Mammary epithelial cell (primary cell): ENCODE measurements at regions of chr12 and their contacts with region 1.

Region 1: GRCh38 chr12:98490501-98491453 is 24.6 kb upstream of the TMPO start:
- DNase-seq: peak; percentile 63
- H3K4me3 ChIP-seq: no peak overlapping the region
- H3K27ac ChIP-seq: no peak overlapping the region
- H3K4me1 ChIP-seq: peaks cover 6% of the 10 kb centered on the region
- H3K27me3 ChIP-seq: no peaks in the 10 kb centered on the region
- CTCF ChIP-seq: peak; percentile 86 to 92

Region 2: GRCh38 chr12:98424726-98425401 is 65.9 kb before region 1 on chr12:
- CTCF ChIA-PET with region 1: no interaction called
- dilution Hi-C with region 1: no loop called
- in situ Hi-C with region 1: no loop called
- intact Hi-C with region 1: loop called (anchors 1 kb)
- DNase-seq: peak; percentile 69
- H3K4me3 ChIP-seq: no peak overlapping the region
- H3K27ac ChIP-seq: no peak overlapping the region
- H3K4me1 ChIP-seq: no peaks in the 10 kb centered on the region
- H3K27me3 ChIP-seq: no peaks in the 10 kb centered on the region
- CTCF ChIP-seq: peak; percentile 68 to 75

Region 3: DNA sequence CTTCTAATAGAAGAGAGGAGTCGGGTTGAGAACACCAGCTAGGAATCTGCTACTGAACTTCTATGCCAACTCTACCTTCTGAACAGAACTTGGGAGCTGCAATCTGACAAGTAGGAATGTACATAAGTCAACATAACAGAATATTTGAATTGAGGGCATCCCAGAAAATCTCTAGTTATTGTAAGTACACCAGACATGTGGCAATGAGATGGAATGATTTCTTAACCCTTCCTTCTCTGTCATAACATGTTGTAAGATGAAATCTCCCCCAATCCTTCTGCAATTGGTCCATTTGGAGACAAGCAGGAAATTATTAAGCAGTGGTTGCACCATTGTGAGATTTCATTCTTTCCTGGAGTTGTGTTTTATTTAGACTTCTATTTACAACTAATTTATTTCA is 44.1 kb before region 1 on chr12:
- CTCF ChIA-PET with region 1: no interaction called
- dilution Hi-C with region 1: loop called (anchors 5 kb)
- in situ Hi-C with region 1: no loop called
- intact Hi-C with region 1: no loop called
- DNase-seq: peak; percentile 35
- H3K4me3 ChIP-seq: no peak overlapping the region
- H3K27ac ChIP-seq: no peak overlapping the region
- H3K4me1 ChIP-seq: no peaks in the 10 kb centered on the region
- H3K27me3 ChIP-seq: no peaks in the 10 kb centered on the region
- CTCF ChIP-seq: no peak

Region 4: GRCh38 chr12:98516184-98516873 is 25.6 kb after region 1 on chr12:
- CTCF ChIA-PET with region 1: no interaction called
- dilution Hi-C with region 1: no loop called
- in situ Hi-C with region 1: no loop called
- intact Hi-C with region 1: loop called (anchors 1 kb)
- DNase-seq: peak; percentile 78
- H3K4me3 ChIP-seq: peak overlapping the region; percentile 86 to 90 (median 87)
- H3K27ac ChIP-seq: peak overlapping the region; percentile 69
- H3K4me1 ChIP-seq: no peaks in the 10 kb centered on the region
- H3K27me3 ChIP-seq: no peaks in the 10 kb centered on the region
- CTCF ChIP-seq: peak; percentile 51 to 78

Region 5: DNA sequence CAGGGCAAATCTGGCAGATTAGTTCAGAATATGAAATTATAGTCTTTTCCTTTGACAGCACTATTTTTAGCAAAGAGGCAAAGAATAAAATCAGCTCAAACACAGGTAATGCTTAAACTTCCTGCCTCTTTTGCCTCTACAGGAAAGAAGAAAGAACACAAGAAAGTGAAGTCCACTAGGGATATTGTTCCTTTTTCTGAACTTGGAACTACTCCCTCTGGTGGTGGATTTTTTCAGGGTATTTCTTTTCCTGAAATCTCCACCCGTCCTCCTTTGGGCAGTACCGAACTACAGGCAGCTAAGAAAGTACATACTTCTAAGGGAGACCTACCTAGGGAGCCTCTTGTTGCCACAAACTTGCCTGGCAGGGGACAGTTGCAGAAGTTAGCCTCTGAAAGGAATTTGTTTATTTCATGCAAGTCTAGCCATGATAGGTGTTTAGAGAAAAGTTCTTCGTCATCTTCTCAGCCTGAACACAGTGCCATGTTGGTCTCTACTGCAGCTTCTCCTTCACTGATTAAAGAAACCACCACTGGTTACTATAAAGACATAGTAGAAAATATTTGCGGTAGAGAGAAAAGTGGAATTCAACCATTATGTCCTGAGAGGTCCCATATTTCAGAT is 42.0 kb after region 1 on chr12:
- CTCF ChIA-PET with region 1: no interaction called
- dilution Hi-C with region 1: no loop called
- in situ Hi-C with region 1: no loop called
- intact Hi-C with region 1: loop called (anchors 1 kb)
- DNase-seq: peak; percentile 55
- H3K4me3 ChIP-seq: no peak overlapping the region
- H3K27ac ChIP-seq: no peak overlapping the region
- H3K4me1 ChIP-seq: no peaks in the 10 kb centered on the region
- H3K27me3 ChIP-seq: no peaks in the 10 kb centered on the region
- CTCF ChIP-seq: peak; percentile 62 to 65

Region 6: GRCh38 chr12:98544751-98545150 is 54.0 kb after region 1 on chr12:
- CTCF ChIA-PET with region 1: no interaction called
- dilution Hi-C with region 1: no loop called
- in situ Hi-C with region 1: no loop called
- intact Hi-C with region 1: no loop called
- DNase-seq: no peak
- H3K4me3 ChIP-seq: no peak overlapping the region
- H3K27ac ChIP-seq: no peak overlapping the region
- H3K4me1 ChIP-seq: no peaks in the 10 kb centered on the region
- H3K27me3 ChIP-seq: no peaks in the 10 kb centered on the region
- CTCF ChIP-seq: no peak

Region 7: GRCh38 chr12:98653866-98654493 is 163.2 kb after region 1 on chr12:
- CTCF ChIA-PET with region 1: no interaction called
- dilution Hi-C with region 1: no loop called
- in situ Hi-C with region 1: no loop called
- intact Hi-C with region 1: loop called (anchors 1 kb)
- DNase-seq: peak; percentile 23
- H3K4me3 ChIP-seq: no peak overlapping the region
- H3K27ac ChIP-seq: no peak overlapping the region
- H3K4me1 ChIP-seq: no peaks in the 10 kb centered on the region
- H3K27me3 ChIP-seq: no peaks in the 10 kb centered on the region
- CTCF ChIP-seq: peak; percentile 31 to 64